GM18951 (cell line): ENCODE measurements at regions of chrX and their contacts with region 1.

Region 1: GRCh38 chrX:1925053-1925481 is 310.2 kb downstream of the ASMT start:
- POLR2A ChIP-seq: no peak

Region 2: DNA sequence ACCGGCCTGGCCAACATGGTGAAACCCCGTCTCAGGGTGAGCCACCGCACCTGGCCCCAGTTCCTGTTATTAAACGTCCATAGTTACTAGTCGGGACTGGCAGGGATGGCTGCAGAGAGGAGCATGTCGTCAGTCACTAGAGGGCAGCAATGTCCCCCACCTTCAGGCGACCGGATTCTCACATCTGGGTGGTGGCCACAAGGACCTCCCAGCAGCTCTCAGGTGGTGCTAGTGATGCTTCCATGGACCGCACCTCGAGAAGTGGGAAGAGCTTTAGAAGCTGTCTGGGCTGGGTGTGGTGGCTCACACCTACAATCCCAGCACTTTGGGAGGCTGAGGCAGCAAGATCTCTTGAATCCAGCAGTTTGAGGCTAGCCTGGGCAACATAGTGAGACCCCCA is 601.8 kb before region 1 on chrX:
- in situ Hi-C with region 1: loop called (anchors 25 kb)
- POLR2A ChIP-seq: no peak

Region 3: GRCh38 chrX:2325076-2325784 is 400.2 kb after region 1 on chrX:
- in situ Hi-C with region 1: loop called (anchors 25 kb)
- POLR2A ChIP-seq: peak; percentile 34

Region 4: DNA sequence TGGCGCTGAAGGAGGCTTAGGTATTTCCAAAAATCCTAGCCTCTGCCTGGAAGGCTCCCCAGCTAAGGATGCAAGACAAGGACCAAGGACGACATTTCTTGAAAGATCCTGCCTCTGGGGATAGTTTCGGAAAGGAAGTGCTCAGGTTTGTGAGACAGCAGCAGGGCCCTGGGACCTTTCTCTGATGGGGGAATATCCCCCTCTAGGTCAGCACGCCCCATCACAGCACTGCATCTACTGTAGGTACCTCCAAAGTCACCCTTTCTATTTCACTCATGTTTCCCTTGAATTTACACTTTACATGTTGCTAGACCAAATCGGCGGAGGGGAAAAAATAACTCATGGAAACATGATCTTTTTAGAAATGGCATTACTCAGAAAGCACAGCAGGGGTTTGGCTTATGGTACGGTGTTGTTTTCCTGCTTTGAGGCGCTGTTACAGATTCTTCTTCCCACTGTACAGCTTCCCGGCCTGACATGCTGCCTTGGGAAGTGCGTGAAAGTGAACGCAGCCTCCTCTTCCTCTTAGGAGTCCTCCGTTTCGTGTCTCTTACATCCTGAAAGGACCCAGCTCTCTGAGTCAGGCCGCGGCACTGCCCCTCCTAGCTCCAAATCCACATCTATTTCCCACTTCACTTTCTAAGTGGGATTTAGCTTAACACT is 652.9 kb after region 1 on chrX:
- in situ Hi-C with region 1: loop called (anchors 25 kb)
- POLR2A ChIP-seq: no peak